ENCODE measurements at regions of chr1 and their contacts with region 1.

Region 1: GRCh38 chr1:215526553-215527151 is 40.5 kb upstream of the KCTD3 start:
- DNase-seq: no peak
- H3K4me3 ChIP-seq: no peak overlapping the region
- H3K27me3 ChIP-seq: no peaks in the 10 kb centered on the region
- CTCF ChIP-seq: peak; percentile 39

Region 2: DNA sequence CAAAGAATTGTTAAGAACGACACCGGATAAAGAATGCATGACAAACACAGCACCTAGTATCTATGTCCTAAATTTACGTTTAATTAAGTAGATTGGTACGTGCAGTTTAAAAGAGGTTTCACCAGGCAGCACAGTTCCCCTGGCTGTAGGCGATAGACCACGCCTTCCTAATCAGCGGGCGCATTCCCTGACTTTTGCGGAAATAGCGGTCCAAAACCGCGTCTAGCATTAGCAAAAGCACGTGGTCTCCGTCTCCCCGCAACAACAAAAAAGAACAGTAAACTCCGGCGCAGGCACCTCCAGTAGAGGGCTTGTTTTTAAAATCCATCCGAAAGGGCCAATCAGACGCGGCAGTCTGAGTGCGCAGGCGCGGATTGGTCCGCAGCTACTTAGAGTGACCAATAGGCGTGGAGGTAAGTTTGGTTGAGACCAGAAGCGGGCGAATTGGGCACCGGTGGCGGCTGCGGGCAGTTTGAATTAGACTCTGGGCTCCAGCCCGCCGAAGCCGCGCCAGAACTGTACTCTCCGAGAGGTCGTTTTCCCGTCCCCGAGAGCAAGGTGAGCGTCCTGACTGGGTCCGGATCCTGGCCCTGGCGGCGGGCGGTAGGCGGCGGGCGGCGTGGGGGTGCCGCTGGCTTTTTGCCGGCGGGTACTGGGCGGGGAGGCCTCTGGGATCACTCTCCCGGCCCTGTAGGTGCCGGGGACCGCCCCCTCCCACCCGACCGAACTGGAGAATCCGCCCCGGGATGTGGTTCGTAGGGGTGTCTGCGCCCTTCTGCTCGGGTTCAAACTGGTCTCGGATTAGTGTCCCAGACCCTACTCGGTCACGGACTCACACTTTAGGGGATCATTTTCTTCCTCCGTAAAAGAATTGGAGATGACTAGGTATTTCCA is 923.6 kb before region 1 on chr1 and contains the start of gene CENPF:
- CTCF ChIA-PET with region 1: interaction called, 10 read pairs
- POLR2A ChIA-PET with region 1: no interaction called
- DNase-seq: peak; percentile 94
- H3K4me3 ChIP-seq: peak within 1 kb of the TSS; percentile 75
- H3K27me3 ChIP-seq: no peaks in the 10 kb centered on the region
- CTCF ChIP-seq: peak; percentile 48
- polyA plus RNA-seq, gene CENPF: 10.9 and 18.7 TPM in 2 replicates

Region 3: GRCh38 chr1:214632091-214632490 is 894.6 kb before region 1 on chr1:
- CTCF ChIA-PET with region 1: interaction called, 22 read pairs
- POLR2A ChIA-PET with region 1: no interaction called
- DNase-seq: no peak
- H3K4me3 ChIP-seq: no peak overlapping the region
- H3K27me3 ChIP-seq: no peaks in the 10 kb centered on the region
- CTCF ChIP-seq: no peak

Region 4: GRCh38 chr1:215583185-215583749 is 56.6 kb after region 1 on chr1:
- CTCF ChIA-PET with region 1: no interaction called
- POLR2A ChIA-PET with region 1: no interaction called
- DNase-seq: no peak
- H3K4me3 ChIP-seq: no peak overlapping the region
- H3K27me3 ChIP-seq: no peaks in the 10 kb centered on the region
- CTCF ChIP-seq: no peak

Region 5: GRCh38 chr1:215606564-215607168 is 80.0 kb after region 1 on chr1:
- CTCF ChIA-PET with region 1: no interaction called
- POLR2A ChIA-PET with region 1: no interaction called
- DNase-seq: no peak
- H3K4me3 ChIP-seq: no peak overlapping the region
- H3K27me3 ChIP-seq: no peaks in the 10 kb centered on the region
- CTCF ChIP-seq: peak; percentile 43